IMR-90 (cell line): ENCODE measurements at regions of chr6 and their contacts with region 1.

Region 1: DNA sequence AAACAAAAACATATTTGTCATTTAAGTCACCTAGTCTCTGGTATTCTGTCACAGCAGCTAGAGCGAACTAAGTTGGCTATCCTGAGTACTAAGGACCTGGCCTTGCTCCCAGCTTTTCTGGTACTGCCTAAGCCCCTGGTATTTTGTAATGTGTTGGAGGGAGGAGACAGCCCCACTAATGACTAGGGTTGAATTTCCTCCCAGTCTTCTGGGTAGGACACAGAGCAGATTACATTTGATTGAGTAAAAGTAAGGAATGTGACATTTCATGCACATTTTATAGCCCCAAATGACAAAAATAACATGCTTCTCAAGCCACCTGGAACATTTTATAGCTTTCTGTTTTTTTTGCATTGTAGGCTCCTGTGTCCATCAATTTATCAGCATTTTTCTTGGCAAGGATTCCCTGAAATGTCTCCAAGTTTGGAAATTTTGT is 47.9 kb upstream of the DDR1 start:
- DNase-seq: peak; percentile 54
- ATAC-seq: peak; percentile 93
- H3K4me3 ChIP-seq: no peak overlapping the region
- H3K27ac ChIP-seq: no peak overlapping the region
- H3K4me1 ChIP-seq: peaks cover 3% of the 10 kb centered on the region; the same call in 1 of the 2 replicates
- H3K27me3 ChIP-seq: peaks cover 13% of the 10 kb centered on the region
- CTCF ChIP-seq: no peak
- POLR2A ChIP-seq: no peak
- RAD21 ChIP-seq: no peak

Region 2: GRCh38 chr6:30870546-30870945 is 34.1 kb after region 1 on chr6:
- CTCF ChIA-PET with region 1: interaction called, 3 read pairs
- POLR2A ChIA-PET with region 1: no interaction called
- dilution Hi-C with region 1: no loop called
- in situ Hi-C with region 1: loop called (anchors 5 kb)
- intact Hi-C with region 1: no loop called
- DNase-seq: no peak
- ATAC-seq: no peak
- H3K4me3 ChIP-seq: no peak overlapping the region
- H3K27ac ChIP-seq: no peak overlapping the region
- H3K4me1 ChIP-seq: no peaks in the 10 kb centered on the region
- H3K27me3 ChIP-seq: peaks cover 4% of the 10 kb centered on the region
- CTCF ChIP-seq: no peak
- POLR2A ChIP-seq: no peak
- RAD21 ChIP-seq: no peak